Mammary epithelial cell (primary cell): ENCODE measurements at regions of chrX and their contacts with region 1.

Region 1: DNA sequence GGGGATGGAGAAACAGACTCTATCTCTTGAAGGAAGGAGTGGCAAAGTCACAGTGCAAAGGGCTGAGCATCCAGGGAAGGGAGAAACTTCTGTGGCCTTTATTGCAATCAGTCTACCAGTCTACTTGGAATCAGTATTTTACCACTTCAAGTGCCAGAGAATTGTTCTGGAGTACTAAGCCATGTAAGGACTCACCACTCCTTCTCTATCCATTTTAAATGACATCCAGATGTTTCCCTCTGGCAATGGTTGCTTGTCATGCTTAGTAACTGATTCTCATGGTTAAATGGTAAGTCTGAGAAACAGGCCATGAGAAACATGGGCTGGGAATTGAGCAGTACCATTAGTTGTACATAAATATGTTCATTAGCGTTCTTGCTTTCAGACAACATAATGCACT is 21.1 kb upstream of the SMIM10 start:
- DNase-seq: no peak
- H3K4me3 ChIP-seq: no peak overlapping the region
- H3K27ac ChIP-seq: no peak overlapping the region
- H3K4me1 ChIP-seq: peaks cover 7% of the 10 kb centered on the region
- H3K27me3 ChIP-seq: no peaks in the 10 kb centered on the region
- CTCF ChIP-seq: no peak

Region 2: GRCh38 chrX:135003876-135004623 is 34.3 kb after region 1 on chrX:
- CTCF ChIA-PET with region 1: no interaction called
- dilution Hi-C with region 1: no loop called
- in situ Hi-C with region 1: no loop called
- intact Hi-C with region 1: loop called (anchors 1 kb)
- DNase-seq: peak; percentile 81
- H3K4me3 ChIP-seq: peak overlapping the region; percentile 38 to 56 (median 47)
- H3K27ac ChIP-seq: peak overlapping the region; percentile 52
- H3K4me1 ChIP-seq: no peaks in the 10 kb centered on the region
- H3K27me3 ChIP-seq: no peaks in the 10 kb centered on the region
- CTCF ChIP-seq: no peak

Region 3: GRCh38 chrX:135015523-135016245 is 46.0 kb after region 1 on chrX:
- CTCF ChIA-PET with region 1: no interaction called
- dilution Hi-C with region 1: loop called (anchors 5 kb)
- in situ Hi-C with region 1: no loop called
- intact Hi-C with region 1: no loop called
- DNase-seq: no peak
- H3K4me3 ChIP-seq: no peak overlapping the region
- H3K27ac ChIP-seq: no peak overlapping the region
- H3K4me1 ChIP-seq: no peaks in the 10 kb centered on the region
- H3K27me3 ChIP-seq: no peaks in the 10 kb centered on the region
- CTCF ChIP-seq: no peak

Region 4: GRCh38 chrX:135086197-135086854 is 116.6 kb after region 1 on chrX:
- CTCF ChIA-PET with region 1: no interaction called
- dilution Hi-C with region 1: no loop called
- in situ Hi-C with region 1: no loop called
- intact Hi-C with region 1: loop called (anchors 1 kb)
- DNase-seq: peak; percentile 68
- H3K4me3 ChIP-seq: no peak overlapping the region
- H3K27ac ChIP-seq: no peak overlapping the region
- H3K4me1 ChIP-seq: no peaks in the 10 kb centered on the region
- H3K27me3 ChIP-seq: no peaks in the 10 kb centered on the region
- CTCF ChIP-seq: peak; percentile 74

Region 5: DNA sequence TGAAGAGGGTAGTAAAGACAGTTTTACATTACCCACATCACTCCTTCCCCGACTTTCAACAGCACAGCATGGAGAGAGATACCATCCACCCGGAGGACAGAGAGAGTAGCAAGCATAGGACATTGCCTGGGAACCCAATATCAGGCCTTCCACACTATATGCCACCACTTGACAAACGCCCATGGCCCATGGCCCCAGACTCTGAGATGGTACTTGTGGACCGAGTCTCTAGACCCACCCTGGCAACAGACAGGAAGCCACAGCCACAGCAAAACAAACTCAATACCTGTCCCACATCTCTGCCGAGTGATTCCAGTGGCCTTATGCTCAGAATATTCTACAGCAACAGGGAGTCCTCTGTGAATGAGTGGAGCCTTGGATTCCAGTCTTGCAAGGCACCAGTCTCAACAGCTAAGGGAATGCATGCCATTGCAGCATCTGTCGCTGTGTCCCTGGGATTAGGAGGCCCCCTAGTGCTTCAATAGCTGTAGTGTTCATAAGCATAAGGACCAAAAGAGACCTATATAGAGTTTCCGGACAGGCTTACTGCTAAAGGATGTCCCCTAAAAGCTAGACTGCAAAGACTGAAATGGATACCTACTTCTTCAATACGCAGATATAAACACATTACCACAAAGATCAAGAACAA is 216.2 kb after region 1 on chrX:
- CTCF ChIA-PET with region 1: no interaction called
- dilution Hi-C with region 1: no loop called
- in situ Hi-C with region 1: no loop called
- intact Hi-C with region 1: loop called (anchors 1 kb)
- DNase-seq: peak; percentile 53
- H3K4me3 ChIP-seq: no peak overlapping the region
- H3K27ac ChIP-seq: no peak overlapping the region
- H3K4me1 ChIP-seq: no peaks in the 10 kb centered on the region
- H3K27me3 ChIP-seq: no peaks in the 10 kb centered on the region
- CTCF ChIP-seq: peak; percentile 42 to 73

Region 6: GRCh38 chrX:135354288-135354687 is 384.6 kb after region 1 on chrX:
- CTCF ChIA-PET with region 1: no interaction called
- dilution Hi-C with region 1: no loop called
- in situ Hi-C with region 1: no loop called
- intact Hi-C with region 1: no loop called
- DNase-seq: no peak
- H3K4me3 ChIP-seq: no peak overlapping the region
- H3K27ac ChIP-seq: no peak overlapping the region
- H3K4me1 ChIP-seq: no peaks in the 10 kb centered on the region
- H3K27me3 ChIP-seq: no peaks in the 10 kb centered on the region
- CTCF ChIP-seq: no peak